IMR-90 (cell line): ENCODE measurements at regions of chr5 and their contacts with region 1.

Region 1: GRCh38 chr5:40570408-40571129 is 109.1 kb upstream of the PTGER4 start:
- DNase-seq: peak; percentile 90
- ATAC-seq: peak; percentile 77
- H3K4me3 ChIP-seq: no peak overlapping the region
- H3K27ac ChIP-seq: no peak overlapping the region
- H3K4me1 ChIP-seq: peaks cover 8% of the 10 kb centered on the region
- H3K27me3 ChIP-seq: no peaks in the 10 kb centered on the region
- CTCF ChIP-seq: no peak
- POLR2A ChIP-seq: no peak
- RAD21 ChIP-seq: no peak

Region 2: DNA sequence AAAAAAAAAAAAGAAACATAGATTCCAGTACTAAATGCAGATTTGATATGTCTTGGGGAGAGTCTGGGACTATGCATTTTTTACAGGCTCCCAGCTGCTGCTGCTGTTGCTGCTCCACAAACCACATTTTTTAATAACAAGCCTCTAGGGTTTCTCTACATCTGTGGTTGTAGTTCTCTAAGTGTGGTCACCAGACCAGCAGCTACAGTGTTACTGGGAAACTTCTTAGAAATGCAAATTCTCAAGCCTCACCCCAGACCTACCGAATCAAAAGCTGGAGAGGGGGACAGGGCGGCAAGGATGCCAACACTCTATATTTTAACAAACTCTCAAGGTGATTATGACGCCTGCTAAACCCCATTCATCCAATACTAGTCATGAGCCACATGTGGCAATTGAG is 184.3 kb before region 1 on chr5:
- CTCF ChIA-PET with region 1: no interaction called
- POLR2A ChIA-PET with region 1: no interaction called
- dilution Hi-C with region 1: no loop called
- in situ Hi-C with region 1: no loop called
- intact Hi-C with region 1: loop called (anchors 5 kb)
- DNase-seq: peak; percentile 55
- ATAC-seq: peak; percentile 46
- H3K4me3 ChIP-seq: no peak overlapping the region
- H3K27ac ChIP-seq: no peak overlapping the region
- H3K4me1 ChIP-seq: peaks cover 9% of the 10 kb centered on the region
- H3K27me3 ChIP-seq: no peaks in the 10 kb centered on the region
- CTCF ChIP-seq: no peak
- POLR2A ChIP-seq: no peak
- RAD21 ChIP-seq: no peak

Region 3: DNA sequence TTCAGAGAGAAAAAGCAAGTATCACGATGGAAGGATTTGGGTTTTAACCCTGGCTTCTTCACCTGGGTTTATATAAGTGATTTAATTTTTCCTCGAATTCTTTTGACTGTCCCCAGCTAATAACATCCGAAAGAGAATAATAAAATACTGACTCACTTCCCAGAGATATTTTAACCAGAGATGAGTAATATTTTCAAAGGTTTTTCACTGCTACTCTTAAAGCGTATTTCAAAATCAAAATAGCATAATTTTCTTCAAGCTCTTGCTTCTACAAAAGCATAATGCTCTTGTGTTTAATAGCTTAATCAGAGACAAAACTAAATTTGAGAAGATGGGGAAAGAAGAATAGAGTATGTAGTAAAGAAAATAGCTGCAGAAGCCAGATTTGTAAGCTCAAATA is 106.1 kb before region 1 on chr5:
- CTCF ChIA-PET with region 1: no interaction called
- POLR2A ChIA-PET with region 1: no interaction called
- dilution Hi-C with region 1: no loop called
- in situ Hi-C with region 1: no loop called
- intact Hi-C with region 1: no loop called
- DNase-seq: peak; percentile 15
- ATAC-seq: 0 out of 2 replicates have a peak, but pooled peaks have one; percentile 14
- H3K4me3 ChIP-seq: no peak overlapping the region
- H3K27ac ChIP-seq: no peak overlapping the region
- H3K4me1 ChIP-seq: no peaks in the 10 kb centered on the region
- H3K27me3 ChIP-seq: no peaks in the 10 kb centered on the region
- CTCF ChIP-seq: no peak
- POLR2A ChIP-seq: no peak
- RAD21 ChIP-seq: no peak